Left lung (tissue), 14 donors: ENCODE measurements at regions of chr22 and their contacts with region 1.

Region 1: GRCh38 chr22:49770822-49771265 is 56.8 kb downstream of the BRD1 start:
- DNase-seq: peak in 2 of 4 donors; percentile 27 to 78
- ATAC-seq: no peak
- H3K4me3 ChIP-seq: no peak overlapping the region
- H3K27ac ChIP-seq: no peak overlapping the region
- H3K4me1 ChIP-seq: no peaks in the 10 kb centered on the region
- H3K27me3 ChIP-seq: no peaks in the 10 kb centered on the region
- CTCF ChIP-seq: no peak

Region 2: GRCh38 chr22:49826603-49827273 is 55.9 kb after region 1 on chr22:
- intact Hi-C with region 1: no loop called
- DNase-seq: peak in 3 of 4 donors; percentile 39 to 91 (median 43)
- ATAC-seq: peak; percentile 64
- H3K4me3 ChIP-seq: peak overlapping the region; percentile 55 to 86
- H3K27ac ChIP-seq: peak overlapping the region; percentile 74 to 81
- H3K4me1 ChIP-seq: peaks cover 18 to 36% of the 10 kb centered on the region in 2 donors
- H3K27me3 ChIP-seq: no peaks in the 10 kb centered on the region
- CTCF ChIP-seq: no peak

Region 3: DNA sequence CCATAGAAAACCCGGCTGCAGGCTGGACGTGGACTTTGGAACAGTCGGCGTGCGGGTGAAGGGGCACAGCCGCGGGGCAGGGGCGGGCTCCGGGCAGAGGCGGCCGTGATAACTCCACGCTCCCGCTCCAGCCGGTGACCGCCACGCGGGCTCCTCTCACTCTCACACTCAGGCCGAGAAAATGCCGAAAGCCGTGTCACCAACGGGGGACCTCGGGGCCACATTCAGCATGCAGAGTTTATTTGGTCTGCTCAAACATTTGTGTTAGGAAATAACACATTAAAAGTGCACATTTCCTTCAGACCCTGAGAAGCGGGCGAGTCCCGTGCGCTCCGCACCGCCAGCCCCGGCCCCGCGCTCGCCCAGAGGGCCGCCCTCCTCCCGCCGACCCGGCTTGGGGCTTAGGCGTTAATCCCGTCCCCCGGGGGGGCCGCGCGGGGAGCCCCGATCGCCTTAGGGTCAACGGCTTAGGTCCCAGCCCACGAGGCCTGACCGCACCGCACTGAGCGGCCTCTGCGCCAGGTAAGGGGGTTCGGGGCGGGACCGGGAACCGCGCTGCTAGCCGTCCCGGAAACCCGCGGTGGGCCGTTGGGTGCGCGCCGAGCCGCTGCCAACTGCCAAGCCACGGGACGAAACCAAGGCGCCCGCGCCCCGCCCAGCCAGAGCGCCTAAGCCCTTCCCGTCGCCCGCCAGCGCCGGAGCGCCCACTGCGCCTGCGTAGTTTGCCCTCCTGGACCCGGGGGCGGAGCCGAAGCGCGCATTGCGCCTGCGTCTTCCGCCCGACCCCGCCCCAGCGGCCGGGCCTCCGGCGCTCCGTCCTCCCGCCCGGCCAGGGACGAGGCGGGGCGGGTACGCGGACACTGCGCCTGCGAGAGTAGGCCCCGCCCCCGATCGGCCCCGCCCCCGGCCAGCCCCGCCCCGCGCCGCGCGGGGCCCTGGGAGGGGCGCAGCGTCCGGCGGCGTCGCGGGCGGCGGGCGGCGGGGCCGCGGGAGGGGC is 82.4 kb after region 1 on chr22 and contains the start of gene ZBED4:
- intact Hi-C with region 1: no loop called
- DNase-seq: peak; percentile 98 to 100 (median 98)
- ATAC-seq: peak; percentile 93
- H3K4me3 ChIP-seq: peak within 1 kb of the TSS; percentile 66 to 74
- H3K27ac ChIP-seq: peak within 1 kb of the TSS; percentile 94 to 98
- H3K4me1 ChIP-seq: peaks cover 20 to 56% of the 10 kb centered on the region in 2 donors
- H3K27me3 ChIP-seq: peaks cover 20 to 26% of the 10 kb centered on the region in 2 donors
- CTCF ChIP-seq: no peak
- polyA plus RNA-seq, gene ZBED4: 14.5 to 19.8 (median 16.3) TPM

Region 4: GRCh38 chr22:49917974-49918910 is 147.4 kb after region 1 on chr22 and contains the starts of genes ALG12 and CRELD2:
- intact Hi-C with region 1: loop called in 1 of 2 experiments (anchors 10 kb)
- DNase-seq: peak; percentile 96 to 98 (median 97)
- ATAC-seq: peak; percentile 97
- H3K4me3 ChIP-seq: peak within 1 kb of the TSS; percentile 87 to 93
- H3K27ac ChIP-seq: peak within 1 kb of the TSS; percentile 96
- H3K4me1 ChIP-seq: peaks cover 13 to 30% of the 10 kb centered on the region in 2 donors
- H3K27me3 ChIP-seq: no peaks in the 10 kb centered on the region
- CTCF ChIP-seq: no peak
- polyA plus RNA-seq, gene ALG12: 16.4 to 32.6 (median 23.7) TPM
- polyA plus RNA-seq, gene CRELD2: 28.5 to 43.1 (median 31.7) TPM

Region 5: DNA sequence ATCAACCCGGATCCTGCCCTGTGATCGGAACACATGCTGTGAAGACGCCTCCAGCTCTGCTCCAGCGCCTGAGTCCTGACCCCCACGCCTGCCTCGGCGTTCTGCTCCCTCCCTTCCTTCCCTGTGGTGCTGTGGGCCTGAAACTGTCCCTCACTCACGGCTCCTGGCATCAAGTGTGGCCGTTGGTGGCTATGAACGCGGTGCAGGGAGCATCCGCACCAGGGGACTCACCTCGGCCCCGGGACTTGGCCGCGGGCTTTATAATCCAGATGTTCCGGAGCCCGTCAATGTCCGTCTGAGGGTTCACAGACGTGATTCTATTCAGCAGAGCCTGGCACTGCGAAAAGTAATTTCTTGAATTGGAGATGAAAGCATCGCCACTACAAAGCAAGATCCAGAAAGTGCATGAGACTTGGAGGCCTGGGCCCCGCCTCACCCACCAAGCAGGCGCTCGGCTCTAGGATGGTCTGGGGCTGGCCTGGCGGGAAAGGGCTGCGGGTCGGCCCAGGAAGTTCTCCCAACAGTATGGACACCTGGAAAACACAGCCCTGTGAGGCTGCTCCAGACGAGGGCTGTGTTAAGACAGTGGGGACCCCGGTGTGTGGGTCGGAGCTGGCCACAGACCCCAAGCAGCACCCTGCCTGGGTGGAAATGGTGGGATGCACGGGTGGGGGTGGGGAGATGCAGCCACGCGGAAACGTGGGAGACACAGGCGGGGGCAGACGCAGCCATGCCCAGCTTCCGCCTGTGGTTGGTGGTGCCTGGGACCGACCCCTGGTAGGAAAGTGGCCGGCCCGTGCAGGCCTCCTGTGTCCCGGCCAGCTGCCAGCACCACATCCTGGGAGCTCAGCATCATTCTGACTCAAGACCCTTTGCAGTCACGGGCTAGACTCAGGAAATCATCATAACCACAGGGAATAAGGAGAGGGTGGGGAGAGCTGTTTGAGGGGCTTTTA is 263.6 kb after region 1 on chr22:
- intact Hi-C with region 1: no loop called
- DNase-seq: peak in 2 of 4 donors; percentile 16 to 68
- ATAC-seq: no peak
- H3K4me3 ChIP-seq: no peak overlapping the region
- H3K27ac ChIP-seq: no peak overlapping the region
- H3K4me1 ChIP-seq: peaks cover 3 to 10% of the 10 kb centered on the region in 2 donors
- H3K27me3 ChIP-seq: peaks cover 0 to 69% of the 10 kb centered on the region in 2 donors
- CTCF ChIP-seq: no peak